CD14-positive monocyte (primary cell): ENCODE measurements at regions of chr3 and their contacts with region 1.

Region 1: DNA sequence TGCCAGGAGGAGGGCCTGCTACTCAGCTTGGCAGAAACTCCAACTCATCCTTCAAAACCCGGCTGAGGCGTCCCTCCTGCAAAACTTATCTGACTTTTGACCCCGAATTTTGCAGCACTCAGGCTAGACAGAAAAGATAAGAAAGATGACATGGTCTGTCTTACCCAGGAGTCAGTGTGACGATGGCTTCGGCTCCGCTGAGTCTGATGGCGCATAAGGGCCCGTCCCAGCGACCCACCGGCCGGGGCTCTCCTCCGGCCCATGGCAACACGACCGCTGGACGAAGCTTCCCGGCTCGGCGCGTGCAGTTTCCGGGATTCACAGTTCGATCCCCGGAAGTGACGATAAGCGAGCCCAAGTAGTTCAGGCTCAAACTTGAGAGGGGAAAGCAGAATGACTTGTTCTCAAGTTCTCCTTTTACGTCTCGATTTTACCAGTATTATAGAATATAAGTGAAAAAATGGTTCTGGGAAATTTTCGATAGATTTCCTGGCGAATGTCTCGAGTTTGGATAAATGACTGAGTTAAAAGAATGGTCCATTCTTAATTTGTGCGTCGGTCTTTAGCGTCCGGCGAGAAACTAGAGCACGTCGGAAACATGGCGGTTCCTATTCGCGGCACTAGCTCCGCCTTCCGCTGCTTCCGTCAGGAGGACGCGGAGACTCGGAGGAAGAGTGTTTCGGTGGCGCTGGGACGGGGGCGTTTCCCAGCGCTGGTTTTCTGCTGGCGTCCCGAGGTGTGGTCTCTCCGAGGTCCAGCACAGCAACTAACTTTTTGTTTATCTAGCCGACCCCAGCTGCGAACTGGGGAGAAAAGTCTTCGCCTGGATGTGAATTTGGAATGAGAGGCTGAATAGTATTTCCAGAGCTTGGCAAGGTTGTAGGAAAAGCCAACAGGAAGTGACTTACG is at the start of gene LSG1:
- DNase-seq: peak; percentile 92 to 96 (median 94)
- H3K4me3 ChIP-seq: peak within 1 kb of the TSS; percentile 77 to 97 (median 89)
- H3K4me3 Mint-ChIP-seq: peak within 1 kb of the TSS; percentile 89 to 98
- H3K27ac ChIP-seq: peak within 1 kb of the TSS; percentile 57 to 96
- H3K27ac Mint-ChIP-seq: peak within 1 kb of the TSS; percentile 94 to 99 (median 97)
- H3K4me1 ChIP-seq: peaks cover 14 to 21% of the 10 kb centered on the region in 2 donors
- H3K4me1 Mint-ChIP-seq: peaks cover 14% of the 10 kb centered on the region
- H3K27me3 ChIP-seq: no peaks in the 10 kb centered on the region
- H3K27me3 Mint-ChIP-seq: peaks cover 4 to 6% (median 5%) of the 10 kb centered on the region in 3 donors
- CTCF ChIP-seq: no peak
- polyA plus RNA-seq, gene LSG1: 6.7 to 30.9 (median 9.9) TPM

Region 2: DNA sequence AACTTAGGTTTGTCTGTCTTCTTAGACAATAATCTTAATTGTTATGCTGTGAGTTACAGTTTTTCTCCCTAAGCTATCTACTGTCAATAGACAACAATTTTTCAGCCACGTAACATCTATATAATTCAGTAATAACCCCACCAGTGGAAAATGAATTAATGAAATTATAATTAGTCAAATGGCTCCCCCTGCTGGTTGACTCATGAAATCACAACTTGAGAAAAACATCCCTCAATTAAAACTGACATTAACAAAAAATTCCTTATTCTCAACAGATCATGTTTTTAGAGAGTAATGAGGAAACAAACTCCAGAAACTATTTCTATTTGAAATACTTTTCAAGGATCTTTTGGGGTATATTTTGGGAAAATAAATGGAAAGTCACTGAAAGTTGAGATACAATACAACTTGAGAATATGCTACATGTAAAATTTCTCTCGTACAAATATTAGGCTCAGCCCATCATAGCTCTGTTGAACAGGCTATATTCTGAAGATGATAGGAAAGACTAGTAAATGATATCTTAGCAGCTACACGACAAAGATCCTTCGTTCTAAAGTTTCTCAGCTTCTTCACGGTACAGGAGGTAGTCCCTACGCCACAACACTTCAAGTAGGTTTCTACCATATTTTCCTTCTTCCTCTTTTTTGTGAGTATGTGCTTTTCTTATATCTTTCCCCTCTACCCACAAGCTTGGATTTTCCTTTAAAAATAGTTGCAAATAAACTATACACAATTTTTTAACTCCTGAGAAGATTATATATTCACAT is 850.3 kb after region 1 on chr3:
- intact Hi-C with region 1: loop called in 1 of 2 experiments (anchors 10 kb)
- DNase-seq: peak in 2 of 3 donors; percentile 32 to 60
- H3K4me3 ChIP-seq: no peak overlapping the region
- H3K4me3 Mint-ChIP-seq: no peak overlapping the region
- H3K27ac ChIP-seq: no peak overlapping the region
- H3K27ac Mint-ChIP-seq: peak overlapping the region in 2 of 7 donors; percentile 13 to 31
- H3K4me1 ChIP-seq: no peaks in the 10 kb centered on the region
- H3K4me1 Mint-ChIP-seq: peaks cover 4% of the 10 kb centered on the region
- H3K27me3 ChIP-seq: no peaks in the 10 kb centered on the region
- H3K27me3 Mint-ChIP-seq: no peaks in the 10 kb centered on the region
- CTCF ChIP-seq: peak; percentile 81